Activated CD4-positive, alpha-beta T cell treated with anti-CD3 and anti-CD28 coated beads for 36 hours (primary cell): ENCODE measurements at regions of chr1 and their contacts with region 1.

Region 1: GRCh38 chr1:43171876-43172526 is at the starts of genes CFAP57 and EBNA1BP2:
- DNase-seq: peak; percentile 94
- ATAC-seq: peak; percentile 93
- H3K4me3 Mint-ChIP-seq: peak within 1 kb of the TSS; percentile 93
- H3K27ac Mint-ChIP-seq: peak within 1 kb of the TSS; percentile 95
- H3K4me1 Mint-ChIP-seq: peaks cover 29% of the 10 kb centered on the region
- H3K27me3 Mint-ChIP-seq: peaks cover 9% of the 10 kb centered on the region
- total RNA-seq, gene CFAP57: 0.11 TPM in 1 of 2 experiments, not detected in the other
- total RNA-seq, gene EBNA1BP2: 100 to 114 TPM

Region 2: DNA sequence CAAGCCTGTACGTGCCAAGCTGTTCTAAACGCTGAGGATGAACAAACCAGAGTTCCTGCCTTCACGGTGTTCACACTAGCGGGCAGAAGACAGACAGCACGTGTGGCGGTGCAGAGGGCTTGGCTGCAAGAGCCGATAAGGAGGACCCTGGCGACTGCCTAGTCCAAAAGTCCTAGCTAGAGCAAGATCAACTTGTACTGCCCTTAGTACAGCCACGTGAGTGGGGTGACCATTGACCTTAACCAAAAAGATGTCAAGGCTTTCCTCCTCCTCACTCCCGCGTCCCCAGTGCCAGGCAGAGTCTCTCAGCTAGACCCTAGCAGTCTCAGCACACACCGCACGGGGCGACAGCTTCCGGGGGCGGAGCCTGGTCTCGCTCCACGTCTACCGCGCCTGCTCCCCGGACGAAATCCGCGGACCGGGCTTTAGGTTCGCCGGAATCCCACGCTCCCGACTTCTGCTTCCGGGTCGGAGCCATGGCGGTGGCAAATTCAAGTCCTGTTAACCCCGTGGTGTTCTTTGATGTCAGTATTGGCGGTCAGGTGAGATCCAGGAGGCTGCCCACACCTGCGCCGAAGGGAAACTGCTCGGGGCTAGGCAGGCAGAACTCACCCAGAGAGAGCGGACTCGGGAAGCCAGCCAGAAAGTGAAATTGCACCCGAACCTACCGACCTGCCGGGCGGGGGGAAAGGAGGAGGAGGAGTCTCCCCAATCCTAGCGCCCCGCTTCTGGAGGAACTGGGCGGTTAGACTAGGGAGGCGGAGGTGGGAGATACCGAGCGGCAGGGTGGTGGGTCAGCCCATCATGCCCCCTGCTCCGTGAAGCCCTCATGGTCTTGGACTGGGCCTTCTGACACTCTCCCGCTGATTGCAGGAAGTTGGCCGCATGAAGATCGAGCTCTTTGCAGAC is 513.8 kb before region 1 on chr1 and contains the start of gene PPIH:
- CTCF ChIA-PET with region 1: no interaction called
- POLR2A ChIA-PET with region 1: no interaction called
- intact Hi-C with region 1: loop called in 1 of 2 experiments (anchors 1 kb)
- DNase-seq: peak; percentile 98
- ATAC-seq: peak; percentile 97
- H3K4me3 Mint-ChIP-seq: peak within 1 kb of the TSS; percentile 97
- H3K27ac Mint-ChIP-seq: peak within 1 kb of the TSS; percentile 97
- H3K4me1 Mint-ChIP-seq: peaks cover 39% of the 10 kb centered on the region
- H3K27me3 Mint-ChIP-seq: no peaks in the 10 kb centered on the region
- total RNA-seq, gene PPIH: 111 to 114 TPM

Region 3: GRCh38 chr1:42846257-42847110 is 325.5 kb before region 1 on chr1 and contains the start of gene ZNF691:
- CTCF ChIA-PET with region 1: interaction called, 4 read pairs
- POLR2A ChIA-PET with region 1: no interaction called
- intact Hi-C with region 1: loop called in 1 of 2 experiments (anchors 1 kb)
- DNase-seq: peak; percentile 94
- ATAC-seq: peak; percentile 93
- H3K4me3 Mint-ChIP-seq: peak within 1 kb of the TSS; percentile 97
- H3K27ac Mint-ChIP-seq: peak within 1 kb of the TSS; percentile 89
- H3K4me1 Mint-ChIP-seq: peaks cover 34% of the 10 kb centered on the region
- H3K27me3 Mint-ChIP-seq: no peaks in the 10 kb centered on the region
- total RNA-seq, gene ZNF691: 10.5 to 11.7 TPM

Region 4: DNA sequence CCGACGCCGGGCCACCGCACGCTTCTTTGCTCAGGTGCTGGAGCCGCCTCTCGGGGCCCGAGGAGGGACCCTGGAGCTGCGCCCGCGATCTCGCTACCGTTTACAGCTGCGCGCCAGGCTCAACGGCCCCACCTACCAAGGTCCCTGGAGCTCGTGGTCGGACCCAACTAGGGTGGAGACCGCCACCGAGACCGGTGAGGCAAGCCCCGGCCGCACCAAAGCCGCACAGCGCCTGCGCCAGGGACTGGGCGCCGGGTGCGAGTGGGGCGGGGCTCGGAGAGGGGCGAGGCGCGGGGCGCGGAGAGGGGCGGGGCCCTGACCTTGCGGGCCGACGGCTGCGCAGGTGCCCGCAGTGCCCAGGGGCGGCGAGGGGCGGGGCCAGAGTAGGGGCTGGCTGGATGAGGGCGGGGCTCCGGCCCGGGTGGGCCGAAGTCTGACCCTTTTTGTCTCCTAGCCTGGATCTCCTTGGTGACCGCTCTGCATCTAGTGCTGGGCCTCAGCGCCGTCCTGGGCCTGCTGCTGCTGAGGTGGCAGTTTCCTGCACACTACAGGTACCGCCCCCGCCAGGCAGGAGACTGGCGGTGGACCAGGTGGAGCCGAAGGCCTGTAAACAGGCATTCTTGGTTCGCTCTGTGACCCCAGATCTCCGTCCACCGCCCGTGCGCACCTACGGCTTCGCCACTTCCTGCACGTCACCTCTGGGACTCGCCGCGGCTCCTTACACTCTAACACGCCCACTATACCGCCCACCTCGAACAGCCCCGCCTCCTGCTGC is 177.0 kb after region 1 on chr1:
- CTCF ChIA-PET with region 1: no interaction called
- POLR2A ChIA-PET with region 1: no interaction called
- intact Hi-C with region 1: loop called in 1 of 2 experiments (anchors 1 kb)
- DNase-seq: peak; percentile 89
- ATAC-seq: peak; percentile 89
- H3K4me3 Mint-ChIP-seq: peak overlapping the region; percentile 71
- H3K27ac Mint-ChIP-seq: peak overlapping the region; percentile 72
- H3K4me1 Mint-ChIP-seq: peaks cover 19% of the 10 kb centered on the region
- H3K27me3 Mint-ChIP-seq: no peaks in the 10 kb centered on the region

Region 5: GRCh38 chr1:43454266-43455011 is 282.4 kb after region 1 on chr1:
- CTCF ChIA-PET with region 1: no interaction called
- POLR2A ChIA-PET with region 1: no interaction called
- intact Hi-C with region 1: loop called in 1 of 2 experiments (anchors 1 kb)
- DNase-seq: peak; percentile 78
- ATAC-seq: peak; percentile 92
- H3K4me3 Mint-ChIP-seq: peak overlapping the region; percentile 79
- H3K27ac Mint-ChIP-seq: peak overlapping the region; percentile 79
- H3K4me1 Mint-ChIP-seq: peaks cover 17% of the 10 kb centered on the region
- H3K27me3 Mint-ChIP-seq: peaks cover 16% of the 10 kb centered on the region

Region 6: GRCh38 chr1:44213222-44214112 is 1041.5 kb after region 1 on chr1 and contains the start of gene DMAP1:
- CTCF ChIA-PET with region 1: no interaction called
- POLR2A ChIA-PET with region 1: no interaction called
- intact Hi-C with region 1: loop called in 1 of 2 experiments (anchors 2 kb)
- DNase-seq: peak; percentile 91
- ATAC-seq: peak; percentile 92
- H3K4me3 Mint-ChIP-seq: peak within 1 kb of the TSS; percentile 94
- H3K27ac Mint-ChIP-seq: peak within 1 kb of the TSS; percentile 93
- H3K4me1 Mint-ChIP-seq: peaks cover 33% of the 10 kb centered on the region
- H3K27me3 Mint-ChIP-seq: no peaks in the 10 kb centered on the region
- total RNA-seq, gene DMAP1: 30.2 to 34.8 TPM